ENCODE measurements at regions of chr10 and their contacts with region 1.

Region 1: DNA sequence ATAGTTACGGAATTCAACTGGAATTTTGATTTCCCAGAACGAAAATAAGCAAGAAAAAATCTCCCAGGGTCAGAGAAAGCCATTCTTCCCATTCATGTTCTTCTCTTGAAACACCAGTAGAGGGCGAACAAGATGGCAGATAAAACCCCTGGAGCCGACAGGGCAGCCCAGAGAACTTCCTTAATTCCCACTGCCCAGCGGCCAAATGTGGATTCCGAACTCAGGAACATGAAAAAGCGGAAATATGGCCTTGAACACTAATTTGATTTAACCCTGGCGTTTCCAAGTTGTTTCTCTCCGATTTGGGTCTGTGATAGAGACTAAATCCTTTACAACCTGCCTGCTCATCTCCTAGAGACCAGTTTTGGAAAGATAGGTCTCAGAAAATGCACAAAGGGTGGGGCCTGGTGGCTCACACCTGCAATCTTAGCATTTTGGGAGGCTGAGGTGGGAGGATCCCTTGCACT is 100.7 kb upstream of the WAC start:
- H3K4me3 Mint-ChIP-seq: peak overlapping the region; percentile 9
- H3K27ac Mint-ChIP-seq: peak overlapping the region; percentile 39
- H3K4me1 Mint-ChIP-seq: peaks cover 28% of the 10 kb centered on the region
- H3K27me3 Mint-ChIP-seq: no peaks in the 10 kb centered on the region

Region 2: DNA sequence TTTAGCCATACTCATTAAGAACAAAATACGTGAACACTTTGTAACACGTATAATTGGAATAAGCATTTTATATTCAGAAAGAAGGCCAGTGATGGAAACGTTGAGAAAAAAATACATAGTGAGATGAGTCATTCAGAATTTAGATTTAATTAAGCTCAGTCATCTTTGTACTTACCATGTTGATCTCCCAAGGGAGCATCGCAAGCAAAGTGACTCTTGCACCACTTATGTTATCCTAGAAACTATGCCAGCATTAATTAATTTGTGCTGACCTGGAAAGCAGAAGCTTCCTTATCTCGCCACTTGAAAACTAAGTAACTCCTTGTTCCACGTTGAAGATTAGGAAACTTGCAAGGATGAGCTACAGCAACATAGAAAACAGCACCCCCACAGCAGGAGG is 119.7 kb before region 1 on chr10:
- intact Hi-C with region 1: no loop called
- H3K4me3 Mint-ChIP-seq: no peak overlapping the region
- H3K27ac Mint-ChIP-seq: no peak overlapping the region
- H3K4me1 Mint-ChIP-seq: peaks cover 10% of the 10 kb centered on the region
- H3K27me3 Mint-ChIP-seq: no peaks in the 10 kb centered on the region

Region 3: GRCh38 chr10:28479425-28479865 is 47.2 kb after region 1 on chr10:
- intact Hi-C with region 1: loop called (anchors 5 kb)
- H3K4me3 Mint-ChIP-seq: no peak overlapping the region
- H3K27ac Mint-ChIP-seq: peak overlapping the region; percentile 75
- H3K4me1 Mint-ChIP-seq: peaks cover 53% of the 10 kb centered on the region
- H3K27me3 Mint-ChIP-seq: no peaks in the 10 kb centered on the region

Region 4: DNA sequence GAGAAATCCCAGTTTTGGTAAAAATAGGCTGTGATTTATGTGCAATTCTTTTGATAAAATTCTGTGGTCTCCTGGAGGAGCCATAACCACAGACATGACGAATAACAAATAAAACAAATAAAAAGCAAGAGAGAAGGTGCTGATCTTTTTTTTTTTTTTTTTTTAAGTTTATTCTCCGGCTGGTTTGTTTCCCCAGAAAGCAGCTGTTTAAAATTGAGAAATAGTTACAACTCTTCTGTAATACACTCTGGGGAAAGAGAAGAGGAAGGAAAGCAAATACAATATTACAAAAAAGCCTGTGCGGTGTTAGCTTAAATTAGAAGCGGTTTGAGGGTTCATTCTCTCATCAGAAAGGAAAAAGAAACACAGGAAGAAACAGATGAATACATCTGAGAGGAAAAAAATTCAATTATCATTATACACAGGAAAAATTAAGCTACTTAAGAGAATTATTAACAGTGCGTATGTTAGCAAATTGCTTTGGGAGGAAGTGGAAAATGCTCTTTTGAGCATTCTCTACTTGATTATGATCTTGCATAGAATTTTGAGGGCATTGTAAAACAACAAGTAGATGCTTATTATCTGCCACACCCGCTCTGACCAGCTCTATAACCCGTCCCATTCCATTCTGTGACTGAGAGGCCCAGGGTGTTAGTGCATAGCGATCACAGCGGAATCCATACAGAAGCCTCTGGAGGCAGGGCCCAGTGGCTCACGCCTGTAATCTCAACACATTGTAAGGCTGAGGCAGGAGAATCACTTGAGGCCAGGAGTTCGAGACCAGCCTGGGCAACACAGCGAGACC is 60.1 kb after region 1 on chr10:
- intact Hi-C with region 1: loop called (anchors 5 kb)
- H3K4me3 Mint-ChIP-seq: peak overlapping the region; percentile 66
- H3K27ac Mint-ChIP-seq: peak overlapping the region; percentile 98
- H3K4me1 Mint-ChIP-seq: peaks cover 79% of the 10 kb centered on the region
- H3K27me3 Mint-ChIP-seq: no peaks in the 10 kb centered on the region

Region 5: DNA sequence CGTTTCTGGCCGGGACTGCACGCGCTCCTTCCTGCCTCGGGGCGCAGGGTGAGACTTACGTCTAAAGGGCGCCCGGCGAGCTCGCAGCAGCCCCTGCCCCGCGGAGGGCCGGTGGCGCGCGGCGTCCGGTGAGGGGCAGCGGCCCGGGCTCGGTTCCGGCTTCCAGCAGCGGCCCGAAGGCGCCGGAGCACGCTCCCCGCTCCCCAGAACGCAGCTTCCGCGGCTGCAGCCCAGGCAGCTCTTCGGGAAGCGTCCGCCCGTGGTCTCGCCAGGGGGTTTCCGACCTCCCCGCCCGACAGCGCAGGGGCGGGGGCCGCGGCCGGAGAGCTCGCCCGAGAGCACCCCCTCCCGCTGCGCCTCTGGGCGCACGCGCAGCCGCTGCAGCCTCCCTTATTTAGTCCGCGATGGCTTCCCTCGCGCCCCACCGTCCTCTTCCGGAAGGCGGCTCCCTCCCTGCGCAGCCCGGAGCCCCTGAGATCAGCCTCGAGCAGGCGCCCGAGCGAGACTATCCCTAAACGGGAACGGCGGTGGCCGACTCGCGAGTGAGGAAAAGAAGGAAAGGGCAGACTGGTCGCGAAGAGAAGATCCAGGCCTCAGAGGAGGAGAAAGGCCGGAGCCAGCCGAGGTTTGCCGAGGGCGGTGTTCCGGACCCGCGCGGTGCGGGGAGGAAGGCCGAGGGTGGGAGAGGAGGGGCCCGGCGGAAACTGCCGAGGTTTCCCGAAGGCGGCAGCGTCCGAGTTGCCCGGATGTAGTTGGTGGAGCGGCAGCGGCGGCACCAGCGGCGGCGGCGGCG is 100.3 kb after region 1 on chr10 and contains the start of gene WAC:
- intact Hi-C with region 1: loop called (anchors 2 kb)
- H3K4me3 Mint-ChIP-seq: peak within 1 kb of the TSS; percentile 99
- H3K27ac Mint-ChIP-seq: peak within 1 kb of the TSS; percentile 100
- H3K4me1 Mint-ChIP-seq: peaks cover 51% of the 10 kb centered on the region
- H3K27me3 Mint-ChIP-seq: no peaks in the 10 kb centered on the region

Region 6: GRCh38 chr10:28587970-28588290 is 155.7 kb after region 1 on chr10:
- intact Hi-C with region 1: loop called (anchors 5 kb)
- H3K4me3 Mint-ChIP-seq: no peak overlapping the region
- H3K27ac Mint-ChIP-seq: peak overlapping the region; percentile 55
- H3K4me1 Mint-ChIP-seq: peaks cover 49% of the 10 kb centered on the region
- H3K27me3 Mint-ChIP-seq: no peaks in the 10 kb centered on the region

Measured in dendritic cell treated with granulocyte-macrophage colony-stimulating factor and Interleukin-4, amounts not matched to agents 40 ng/mL and 50 ng/mL, for 4 days (primary cell).